MCF 10A (cell line): ENCODE measurements at regions of chr3 and their contacts with region 1.

Region 1: DNA sequence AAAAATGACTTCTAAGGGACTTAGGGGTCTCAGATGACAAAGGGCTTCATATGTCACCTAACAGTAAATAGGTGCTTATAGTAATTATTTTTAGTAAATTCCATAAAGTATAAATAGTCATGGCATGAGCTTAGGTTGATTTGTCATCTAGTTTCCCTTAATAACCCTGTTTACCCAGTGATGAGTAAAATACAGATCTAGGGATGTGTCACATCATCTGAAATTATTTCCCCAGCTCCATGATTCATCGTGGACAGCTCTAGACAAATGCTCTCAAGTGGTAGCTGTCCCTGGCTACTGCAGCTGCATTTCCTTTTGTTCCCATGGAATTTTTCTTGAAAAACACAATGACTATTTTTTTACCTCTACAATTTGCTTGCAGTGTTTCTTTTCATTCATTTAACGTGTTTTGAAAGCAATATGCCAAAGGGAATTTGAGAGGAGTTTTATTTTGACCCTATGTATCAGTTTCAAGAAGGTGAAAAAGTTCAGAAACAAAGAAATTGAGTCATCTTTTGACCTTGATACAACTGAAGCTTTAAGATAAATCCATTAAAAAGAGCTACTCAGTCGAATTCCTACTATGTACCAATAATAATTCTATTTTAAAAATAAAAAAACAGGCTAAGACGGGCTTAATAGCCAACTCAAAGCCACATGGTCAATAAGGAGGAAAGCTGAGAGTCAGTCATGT is 241.6 kb downstream of the KCNMB2 start:
- DNase-seq: peak; percentile 68
- H3K4me3 Mint-ChIP-seq: no peak overlapping the region
- H3K27ac Mint-ChIP-seq: no peak overlapping the region
- H3K4me1 Mint-ChIP-seq: peaks cover 8% of the 10 kb centered on the region
- H3K27me3 Mint-ChIP-seq: no peaks in the 10 kb centered on the region
- CTCF ChIP-seq: no peak

Region 2: GRCh38 chr3:178206521-178206920 is 571.3 kb before region 1 on chr3:
- CTCF ChIA-PET with region 1: no interaction called
- POLR2A ChIA-PET with region 1: no interaction called
- intact Hi-C with region 1: no loop called
- DNase-seq: no peak
- H3K4me3 Mint-ChIP-seq: no peak overlapping the region
- H3K27ac Mint-ChIP-seq: no peak overlapping the region
- H3K4me1 Mint-ChIP-seq: peaks cover 15% of the 10 kb centered on the region
- H3K27me3 Mint-ChIP-seq: no peaks in the 10 kb centered on the region
- CTCF ChIP-seq: no peak

Region 3: DNA sequence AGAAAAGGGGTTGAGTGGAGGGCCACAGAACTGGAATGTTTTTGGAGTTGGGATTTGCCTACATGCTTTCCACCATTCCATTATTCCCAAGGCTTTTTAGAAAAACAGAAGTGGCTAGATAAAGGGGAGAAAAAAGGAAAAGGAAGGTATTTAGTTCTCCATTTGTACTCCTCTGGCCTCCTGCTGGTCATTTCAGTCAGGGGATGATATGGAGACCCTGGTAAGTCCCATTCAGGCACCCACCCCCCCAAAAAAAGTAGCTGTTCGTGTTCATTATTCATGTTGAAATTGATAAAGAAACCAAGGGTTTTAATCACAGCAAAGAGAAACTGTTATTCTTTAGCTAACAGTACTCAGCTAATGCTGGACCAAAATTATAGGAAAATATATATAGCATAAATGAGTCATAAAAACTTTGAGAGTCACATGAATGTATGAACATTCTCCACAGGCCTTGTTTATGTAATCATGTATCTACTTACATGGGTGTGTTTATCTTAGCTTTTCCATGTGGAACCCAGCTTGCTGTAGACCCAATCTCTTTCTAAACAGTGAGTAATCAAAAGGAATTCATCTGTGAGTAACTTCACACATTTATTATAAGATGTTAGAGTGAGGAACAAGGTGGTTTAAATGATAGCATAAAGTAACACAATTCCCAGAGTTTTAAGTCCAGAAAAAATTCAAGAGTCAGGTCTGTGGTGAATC is 74.4 kb before region 1 on chr3:
- CTCF ChIA-PET with region 1: no interaction called
- POLR2A ChIA-PET with region 1: interaction called, 5 read pairs
- intact Hi-C with region 1: loop called (anchors 10 kb)
- DNase-seq: peak; percentile 82
- H3K4me3 Mint-ChIP-seq: peak overlapping the region; percentile 9
- H3K27ac Mint-ChIP-seq: peak overlapping the region; percentile 32
- H3K4me1 Mint-ChIP-seq: peaks cover 40% of the 10 kb centered on the region
- H3K27me3 Mint-ChIP-seq: no peaks in the 10 kb centered on the region
- CTCF ChIP-seq: peak; percentile 31

Region 4: DNA sequence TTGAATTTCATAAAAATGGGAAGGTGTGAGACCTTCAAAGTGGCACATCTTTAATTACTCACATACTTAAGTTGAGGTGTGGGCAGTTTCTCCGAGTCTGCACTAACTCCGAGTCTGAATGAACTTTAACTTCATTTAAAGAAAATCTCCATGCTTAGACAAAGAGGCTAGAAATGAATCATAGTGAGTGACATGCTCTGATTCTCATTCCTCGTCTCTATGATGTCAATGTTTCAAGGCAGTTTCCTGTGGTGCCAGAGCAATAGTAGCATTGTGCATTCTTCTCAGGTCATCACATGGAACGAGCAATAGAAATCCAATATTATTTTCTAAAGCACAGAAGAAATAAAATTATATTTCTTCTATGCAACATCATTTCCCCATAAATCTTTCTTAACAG is 16.8 kb before region 1 on chr3:
- CTCF ChIA-PET with region 1: no interaction called
- POLR2A ChIA-PET with region 1: no interaction called
- intact Hi-C with region 1: no loop called
- DNase-seq: no peak
- H3K4me3 Mint-ChIP-seq: no peak overlapping the region
- H3K27ac Mint-ChIP-seq: no peak overlapping the region
- H3K4me1 Mint-ChIP-seq: no peaks in the 10 kb centered on the region
- H3K27me3 Mint-ChIP-seq: no peaks in the 10 kb centered on the region
- CTCF ChIP-seq: no peak

Region 5: DNA sequence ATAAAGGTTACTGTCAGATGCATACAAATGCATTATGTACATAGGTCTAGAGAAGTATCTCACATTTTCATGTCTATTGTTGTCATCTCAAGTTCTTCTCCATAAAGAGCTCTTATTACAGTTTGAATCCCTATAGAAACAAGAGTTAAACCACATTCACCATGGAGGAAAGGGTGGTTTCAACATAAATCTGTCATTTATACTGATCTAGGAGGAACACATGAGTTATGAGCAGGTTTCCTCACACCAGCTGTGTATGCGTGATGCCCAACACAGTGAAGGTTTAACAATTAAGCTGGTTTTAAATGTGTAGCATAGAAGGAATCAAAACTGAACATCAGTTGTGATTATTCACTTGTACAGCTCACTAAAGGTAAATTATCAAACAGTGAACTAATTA is 10.1 kb after region 1 on chr3:
- CTCF ChIA-PET with region 1: no interaction called
- POLR2A ChIA-PET with region 1: no interaction called
- intact Hi-C with region 1: no loop called
- DNase-seq: no peak
- H3K4me3 Mint-ChIP-seq: no peak overlapping the region
- H3K27ac Mint-ChIP-seq: no peak overlapping the region
- H3K4me1 Mint-ChIP-seq: no peaks in the 10 kb centered on the region
- H3K27me3 Mint-ChIP-seq: no peaks in the 10 kb centered on the region
- CTCF ChIP-seq: no peak